HepG2 (cell line): ENCODE measurements at regions of chr17 and their contacts with region 1.

Region 1: GRCh38 chr17:56351675-56352074 is 198.4 kb downstream of the ANKFN1 start:
- DNase-seq: no peak
- ATAC-seq: no peak
- H3K4me3 ChIP-seq: no peak overlapping the region
- H3K27ac ChIP-seq: no peak overlapping the region
- H3K4me1 ChIP-seq: no peaks in the 10 kb centered on the region
- H3K27me3 ChIP-seq: no peaks in the 10 kb centered on the region
- CTCF ChIP-seq: no peak
- EP300 ChIP-seq: no peak
- POLR2A ChIP-seq: no peak
- RAD21 ChIP-seq: no peak

Region 2: GRCh38 chr17:56319517-56319916 is 32.2 kb before region 1 on chr17:
- CTCF ChIA-PET with region 1: no interaction called
- POLR2A ChIA-PET with region 1: no interaction called
- in situ Hi-C with region 1: no loop called
- intact Hi-C with region 1: loop called (anchors 1 kb)
- DNase-seq: peak; percentile 58
- ATAC-seq: peak; percentile 86
- H3K4me3 ChIP-seq: no peak overlapping the region
- H3K27ac ChIP-seq: no peak overlapping the region
- H3K4me1 ChIP-seq: no peaks in the 10 kb centered on the region
- H3K27me3 ChIP-seq: peaks cover 0 to 5% of the 10 kb centered on the region in 2 experiments; a peak in 2 of 5 replicates
- CTCF ChIP-seq: peak; percentile 75
- EP300 ChIP-seq: no peak
- POLR2A ChIP-seq: no peak
- RAD21 ChIP-seq: 0 out of 2 replicates have a peak, but pooled peaks have one; percentile 30